ENCODE measurements at regions of chr17 and their contacts with region 1.

Region 1: GRCh38 chr17:44561237-44561623 is 3.9 kb downstream of the FZD2 start:
- DNase-seq: no peak
- H3K4me3 ChIP-seq: no peak overlapping the region
- H3K27ac ChIP-seq: no peak overlapping the region
- H3K4me1 ChIP-seq: no peaks in the 10 kb centered on the region
- H3K27me3 ChIP-seq: no peaks in the 10 kb centered on the region
- CTCF ChIP-seq: no peak
- POLR2A ChIP-seq: no peak

Region 2: GRCh38 chr17:44547625-44548267 is 13.5 kb before region 1 on chr17:
- intact Hi-C with region 1: loop called (anchors 1 kb)
- DNase-seq: no peak
- H3K4me3 ChIP-seq: no peak overlapping the region
- H3K27ac ChIP-seq: peak overlapping the region in 1 of 2 donors; percentile 12
- H3K4me1 ChIP-seq: no peaks in the 10 kb centered on the region
- H3K27me3 ChIP-seq: no peaks in the 10 kb centered on the region
- CTCF ChIP-seq: no peak
- POLR2A ChIP-seq: no peak